Thyroid gland (tissue), 4 donors: ENCODE measurements at regions of chr2 and their contacts with region 1.

Region 1: GRCh38 chr2:236679884-236680860 is 110.5 kb downstream of the ACKR3 start:
- DNase-seq: no peak
- H3K4me3 ChIP-seq: no peak overlapping the region
- H3K27ac ChIP-seq: no peak overlapping the region
- H3K4me1 ChIP-seq: peaks cover 32 to 41% of the 10 kb centered on the region in 2 donors
- H3K27me3 ChIP-seq: no peaks in the 10 kb centered on the region
- CTCF ChIP-seq: no peak
- POLR2A ChIP-seq: no peak

Region 2: GRCh38 chr2:236824877-236825692 is 144.9 kb after region 1 on chr2:
- intact Hi-C with region 1: loop called (anchors 10 kb)
- DNase-seq: peak; percentile 83 to 86
- H3K4me3 ChIP-seq: no peak overlapping the region
- H3K27ac ChIP-seq: peak overlapping the region; percentile 23 to 66 (median 32)
- H3K4me1 ChIP-seq: peaks cover 30 to 53% of the 10 kb centered on the region in 2 donors
- H3K27me3 ChIP-seq: no peaks in the 10 kb centered on the region
- CTCF ChIP-seq: no peak
- POLR2A ChIP-seq: no peak